HCT116 (cell line): ENCODE measurements at regions of chr15 and their contacts with region 1.

Region 1: GRCh38 chr15:53434174-53434678 is 325.2 kb downstream of the WDR72 start:
- DNase-seq: no peak
- ATAC-seq: no peak
- H3K4me3 ChIP-seq: no peak overlapping the region
- H3K27ac ChIP-seq: no peak overlapping the region
- H3K4me1 ChIP-seq: no peaks in the 10 kb centered on the region
- H3K27me3 ChIP-seq: 0 out of 2 replicates have a peak, but pooled peaks cover 3% of the 10 kb centered on the region
- CTCF ChIP-seq: no peak
- POLR2A ChIP-seq: no peak
- RAD21 ChIP-seq: no peak

Region 2: GRCh38 chr15:53472883-53473282 is 38.7 kb after region 1 on chr15:
- CTCF ChIA-PET with region 1: no interaction called
- POLR2A ChIA-PET with region 1: no interaction called
- RAD21 ChIA-PET with region 1: no interaction called
- intact Hi-C with region 1: loop called (anchors 5 kb)
- DNase-seq: no peak
- ATAC-seq: no peak
- H3K4me3 ChIP-seq: no peak overlapping the region
- H3K27ac ChIP-seq: no peak overlapping the region
- H3K4me1 ChIP-seq: no peaks in the 10 kb centered on the region
- H3K27me3 ChIP-seq: 0 out of 2 replicates have a peak, but pooled peaks cover 12% of the 10 kb centered on the region
- CTCF ChIP-seq: no peak
- POLR2A ChIP-seq: no peak
- RAD21 ChIP-seq: no peak

Region 3: GRCh38 chr15:53665917-53666316 is 231.7 kb after region 1 on chr15:
- CTCF ChIA-PET with region 1: no interaction called
- POLR2A ChIA-PET with region 1: no interaction called
- RAD21 ChIA-PET with region 1: no interaction called
- intact Hi-C with region 1: no loop called
- DNase-seq: no peak
- ATAC-seq: no peak
- H3K4me3 ChIP-seq: no peak overlapping the region
- H3K27ac ChIP-seq: no peak overlapping the region
- H3K4me1 ChIP-seq: no peaks in the 10 kb centered on the region
- H3K27me3 ChIP-seq: no peaks in the 10 kb centered on the region
- CTCF ChIP-seq: peak in 1 of 3 experiments; percentile 24; a peak in 1 of 6 replicates
- POLR2A ChIP-seq: no peak
- RAD21 ChIP-seq: peak; percentile 17; the same call in 1 of the 2 replicates